Sigmoid colon (tissue), 7 donors: ENCODE measurements at regions of chr16 and their contacts with region 1.

Region 1: GRCh38 chr16:71883849-71884638 is at the start of gene ZNF821:
- DNase-seq: peak; percentile 86
- H3K4me3 ChIP-seq: peak within 1 kb of the TSS; percentile 84 to 90 (median 86)
- H3K27ac ChIP-seq: peak within 1 kb of the TSS; percentile 89 to 95 (median 91)
- H3K4me1 ChIP-seq: peaks cover 0 to 21% (median 14%) of the 10 kb centered on the region in 4 donors
- H3K27me3 ChIP-seq: no peaks in the 10 kb centered on the region
- CTCF ChIP-seq: peak in 3 of 4 experiments; percentile 7 to 50 (median 12)
- EP300 ChIP-seq: no peak
- POLR2A ChIP-seq: no peak
- total RNA-seq, gene ZNF821: 2.3 to 9.5 (median 7.5) TPM

Region 2: DNA sequence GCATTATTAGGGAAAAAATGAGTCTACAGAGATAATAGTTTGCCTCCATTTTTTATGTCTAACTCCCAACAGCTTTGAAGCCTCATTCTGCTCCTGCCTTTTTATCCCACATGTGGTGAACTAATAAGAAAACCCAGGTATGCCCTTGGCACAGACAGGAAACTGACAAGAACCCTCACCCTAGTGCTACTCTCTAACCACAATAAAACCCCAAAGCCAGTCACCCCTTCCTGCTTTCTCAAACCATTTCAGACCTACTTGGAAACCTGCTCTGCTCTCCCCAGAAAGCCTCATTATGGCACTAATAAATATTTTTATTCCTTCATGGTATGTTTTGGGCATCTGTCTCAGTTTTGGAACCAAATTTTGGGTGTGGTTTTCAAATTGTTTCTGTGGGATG is 262.0 kb before region 1 on chr16:
- intact Hi-C with region 1: no loop called
- DNase-seq: no peak
- H3K4me3 ChIP-seq: no peak overlapping the region
- H3K27ac ChIP-seq: no peak overlapping the region
- H3K4me1 ChIP-seq: peaks cover 0 to 14% (median 13%) of the 10 kb centered on the region in 4 donors
- H3K27me3 ChIP-seq: peaks cover 22 to 36% (median 26%) of the 10 kb centered on the region in 3 donors
- CTCF ChIP-seq: no peak
- EP300 ChIP-seq: no peak
- POLR2A ChIP-seq: no peak

Region 3: DNA sequence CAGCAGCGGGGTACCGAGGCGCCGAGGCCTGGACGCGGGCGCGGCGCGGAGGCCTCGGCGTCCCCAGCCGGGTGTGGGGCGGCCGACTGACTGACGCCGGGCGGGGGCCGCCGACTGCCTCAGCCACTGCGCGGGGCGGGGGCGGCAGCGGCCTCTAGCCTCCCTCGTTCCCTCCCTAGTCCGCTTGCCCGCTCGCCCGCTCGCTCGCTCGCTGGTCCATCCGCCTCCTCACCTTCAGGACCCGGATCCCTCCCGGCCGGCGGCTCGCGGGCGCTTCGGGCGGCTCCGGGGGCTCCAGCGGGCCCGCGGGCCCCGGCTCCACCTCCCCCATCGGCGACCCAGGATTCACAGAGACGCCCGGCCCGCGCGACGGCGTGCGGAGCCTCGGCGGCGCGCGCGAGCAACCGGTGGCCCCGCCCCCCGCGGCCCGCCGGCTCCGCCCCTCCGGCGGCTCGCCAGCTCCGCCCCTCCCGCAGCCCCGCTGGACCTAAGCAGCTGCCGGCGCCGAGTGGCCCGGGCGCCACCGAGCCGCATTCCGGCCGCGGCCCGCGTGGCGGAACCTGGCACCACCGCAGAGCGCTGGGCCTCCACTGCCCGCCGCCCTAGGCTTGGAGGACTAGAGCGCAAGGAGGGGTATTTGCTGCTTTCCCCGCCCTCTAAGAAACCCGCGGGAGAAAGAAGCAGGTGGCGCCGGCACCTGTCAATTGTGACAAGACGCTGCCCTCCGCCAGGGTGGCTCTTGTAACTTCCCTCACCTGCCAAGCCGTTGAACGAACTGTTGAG is 160.3 kb before region 1 on chr16:
- intact Hi-C with region 1: loop called (anchors 5 kb)
- DNase-seq: peak; percentile 87
- H3K4me3 ChIP-seq: peak overlapping the region; percentile 58 to 96 (median 78)
- H3K27ac ChIP-seq: peak overlapping the region; percentile 81 to 99 (median 96)
- H3K4me1 ChIP-seq: peaks cover 0 to 34% (median 23%) of the 10 kb centered on the region in 4 donors
- H3K27me3 ChIP-seq: no peaks in the 10 kb centered on the region
- CTCF ChIP-seq: no peak
- EP300 ChIP-seq: no peak
- POLR2A ChIP-seq: no peak

Region 4: GRCh38 chr16:71808593-71809459 is 75.2 kb before region 1 on chr16 and contains the start of gene AP1G1:
- intact Hi-C with region 1: loop called (anchors 5 kb)
- DNase-seq: peak; percentile 98
- H3K4me3 ChIP-seq: peak within 1 kb of the TSS; percentile 77 to 98 (median 79)
- H3K27ac ChIP-seq: peak within 1 kb of the TSS; percentile 94 to 99 (median 97)
- H3K4me1 ChIP-seq: peaks cover 0 to 38% (median 31%) of the 10 kb centered on the region in 4 donors
- H3K27me3 ChIP-seq: no peaks in the 10 kb centered on the region
- CTCF ChIP-seq: no peak
- EP300 ChIP-seq: peak in 1 of 4 donors; percentile 65
- POLR2A ChIP-seq: peak; percentile 50 to 57
- total RNA-seq, gene AP1G1: 34.9 to 57.3 (median 51.1) TPM

Region 5: GRCh38 chr16:71845639-71846430 is 38.2 kb before region 1 on chr16 and contains the start of gene ATXN1L:
- intact Hi-C with region 1: loop called (anchors 5 kb)
- DNase-seq: peak; percentile 96
- H3K4me3 ChIP-seq: peak within 1 kb of the TSS; percentile 81 to 94 (median 92)
- H3K27ac ChIP-seq: peak within 1 kb of the TSS; percentile 83 to 91 (median 88)
- H3K4me1 ChIP-seq: peaks cover 0 to 22% (median 15%) of the 10 kb centered on the region in 4 donors
- H3K27me3 ChIP-seq: no peaks in the 10 kb centered on the region
- CTCF ChIP-seq: no peak
- EP300 ChIP-seq: peak in 1 of 4 donors; percentile 70
- POLR2A ChIP-seq: peak; percentile 73 to 80
- total RNA-seq, gene ATXN1L: 22.8 to 25.0 (median 24.4) TPM

Region 6: GRCh38 chr16:71961066-71962039 is 77.3 kb after region 1 on chr16:
- intact Hi-C with region 1: loop called (anchors 2 kb)
- DNase-seq: peak; percentile 92
- H3K4me3 ChIP-seq: no peak overlapping the region
- H3K27ac ChIP-seq: no peak overlapping the region
- H3K4me1 ChIP-seq: no peaks in the 10 kb centered on the region
- H3K27me3 ChIP-seq: no peaks in the 10 kb centered on the region
- CTCF ChIP-seq: peak; percentile 69 to 75 (median 72)
- EP300 ChIP-seq: no peak
- POLR2A ChIP-seq: no peak

Region 7: DNA sequence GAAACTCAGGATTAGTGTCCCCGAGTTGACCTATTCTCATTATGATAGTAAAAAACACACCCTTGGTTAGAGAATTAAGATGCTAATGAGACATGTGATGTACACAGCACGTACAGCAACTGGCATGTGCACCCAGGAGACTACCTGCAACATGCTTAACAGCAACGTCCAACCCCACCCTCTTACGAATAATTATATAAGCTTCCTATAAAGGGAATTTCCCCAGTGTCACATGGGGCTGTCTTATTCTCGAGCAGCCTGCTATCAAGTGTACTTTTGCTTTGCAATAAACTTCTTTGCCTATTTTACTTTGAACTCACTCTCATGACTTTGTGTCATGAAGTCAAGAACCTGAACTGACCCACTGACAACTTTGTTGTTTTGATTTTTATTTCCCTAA is 350.3 kb after region 1 on chr16:
- intact Hi-C with region 1: no loop called
- DNase-seq: no peak
- H3K4me3 ChIP-seq: no peak overlapping the region
- H3K27ac ChIP-seq: no peak overlapping the region
- H3K4me1 ChIP-seq: no peaks in the 10 kb centered on the region
- H3K27me3 ChIP-seq: no peaks in the 10 kb centered on the region
- CTCF ChIP-seq: no peak
- EP300 ChIP-seq: no peak
- POLR2A ChIP-seq: no peak